A673 (cell line): ENCODE measurements at regions of chr4 and their contacts with region 1.

Region 1: GRCh38 chr4:108018040-108018883 is 28.6 kb downstream of the HADH start:
- DNase-seq: peak; percentile 80
- H3K4me3 ChIP-seq: no peak overlapping the region
- H3K27ac ChIP-seq: no peak overlapping the region
- H3K4me1 ChIP-seq: no peaks in the 10 kb centered on the region
- H3K27me3 ChIP-seq: no peaks in the 10 kb centered on the region
- CTCF ChIP-seq: peak; percentile 93

Region 2: DNA sequence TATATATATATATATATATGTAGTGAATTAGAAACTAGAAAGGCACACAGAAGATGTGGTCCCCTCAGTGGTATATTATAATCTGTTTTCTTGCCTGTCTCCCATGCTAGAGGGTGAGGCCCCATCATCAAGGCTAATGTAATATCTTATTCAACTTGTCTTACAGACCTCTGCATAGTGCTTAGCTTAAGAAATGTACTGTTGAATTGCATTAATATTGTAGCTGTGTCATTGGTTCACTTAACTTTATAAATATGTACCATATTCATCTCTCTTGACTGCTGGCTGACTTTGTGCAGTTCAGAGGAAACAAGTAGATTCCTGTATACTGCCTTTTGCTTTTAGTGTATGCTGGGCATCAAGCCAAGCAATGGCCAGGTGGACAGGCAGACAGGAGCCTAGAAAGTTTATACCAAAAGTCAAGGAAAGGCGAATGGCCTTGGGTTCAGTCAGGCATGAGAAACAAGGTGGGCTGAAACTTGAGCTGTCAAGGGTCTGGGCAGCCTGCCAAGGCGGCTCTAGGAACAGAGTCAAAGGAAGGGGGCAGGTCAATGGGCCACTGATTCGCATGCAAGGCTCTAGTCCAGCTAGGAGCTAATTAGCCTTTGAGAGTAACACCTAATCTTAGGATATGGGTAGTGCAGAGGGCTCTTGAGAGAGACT is 229.3 kb after region 1 on chr4:
- CTCF ChIA-PET with region 1: no interaction called
- POLR2A ChIA-PET with region 1: no interaction called
- intact Hi-C with region 1: no loop called
- DNase-seq: peak; percentile 4
- H3K4me3 ChIP-seq: no peak overlapping the region
- H3K27ac ChIP-seq: no peak overlapping the region
- H3K4me1 ChIP-seq: no peaks in the 10 kb centered on the region
- H3K27me3 ChIP-seq: no peaks in the 10 kb centered on the region
- CTCF ChIP-seq: no peak

Region 3: DNA sequence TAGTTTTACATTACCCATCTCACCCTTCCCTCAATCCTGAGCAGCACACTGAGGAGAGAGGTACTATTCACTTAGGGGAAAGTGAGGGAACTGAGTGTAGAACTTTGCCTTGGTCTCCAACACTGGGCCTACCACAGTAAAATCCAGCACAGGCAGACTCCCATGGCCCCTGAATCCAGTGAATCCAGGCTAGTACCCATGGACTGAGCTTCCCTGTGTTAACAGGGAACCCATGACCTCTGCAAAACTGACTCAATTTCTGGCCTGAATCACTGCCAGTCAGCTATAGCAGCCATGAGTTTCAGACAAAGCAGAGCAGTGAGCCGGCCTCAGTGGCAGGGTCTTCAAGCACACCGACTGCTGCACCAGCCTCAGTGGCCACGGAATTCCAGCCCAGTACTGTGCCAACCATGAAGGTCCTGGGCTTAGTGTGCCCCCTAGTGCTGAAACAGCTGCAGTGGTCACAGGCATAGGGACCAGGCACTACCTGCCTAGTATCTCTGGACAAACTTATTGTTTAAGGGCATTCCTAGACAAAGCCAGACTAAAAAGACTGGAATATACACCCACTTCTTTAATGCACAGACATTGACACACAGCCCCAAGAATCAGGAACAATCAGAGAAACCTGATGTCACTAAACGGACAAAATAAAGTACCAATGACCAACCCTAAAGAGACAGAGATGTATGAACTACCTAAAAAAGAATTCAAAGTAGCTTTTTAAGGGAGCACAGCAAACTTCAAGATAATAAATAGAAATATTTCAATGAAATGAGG is 474.7 kb after region 1 on chr4:
- CTCF ChIA-PET with region 1: interaction called, 3 read pairs
- POLR2A ChIA-PET with region 1: no interaction called
- intact Hi-C with region 1: loop called (anchors 5 kb)
- DNase-seq: peak; percentile 58
- H3K4me3 ChIP-seq: no peak overlapping the region
- H3K27ac ChIP-seq: no peak overlapping the region
- H3K4me1 ChIP-seq: no peaks in the 10 kb centered on the region
- H3K27me3 ChIP-seq: no peaks in the 10 kb centered on the region
- CTCF ChIP-seq: peak; percentile 74